ENCODE measurements at regions of chrX and their contacts with region 1.

Region 1: GRCh38 chrX:154013614-154014360 is 5.9 kb downstream of the IRAK1 start:
- DNase-seq: peak; percentile 37 to 72 (median 65)
- H3K4me3 ChIP-seq: no peak overlapping the region
- H3K27ac ChIP-seq: no peak overlapping the region
- H3K4me1 ChIP-seq: peaks cover 0 to 21% (median 17%) of the 10 kb centered on the region in 4 experiments
- H3K27me3 ChIP-seq: peaks cover 0 to 37% (median 0%) of the 10 kb centered on the region in 5 experiments

Region 2: GRCh38 chrX:153818571-153819383 is 195.0 kb before region 1 on chrX:
- CTCF ChIA-PET with region 1: no interaction called
- POLR2A ChIA-PET with region 1: no interaction called
- DNase-seq: peak; percentile 20 to 58 (median 49)
- H3K4me3 ChIP-seq: peak overlapping the region in 4 of 7 experiments; percentile 16 to 67 (median 42)
- H3K27ac ChIP-seq: no peak overlapping the region
- H3K4me1 ChIP-seq: peaks cover 0 to 42% (median 30%) of the 10 kb centered on the region in 4 experiments
- H3K27me3 ChIP-seq: peaks cover 0 to 44% (median 2%) of the 10 kb centered on the region in 5 experiments

Region 3: GRCh38 chrX:153971450-153972367 is 42.1 kb before region 1 on chrX and contains the start of gene HCFC1:
- CTCF ChIA-PET with region 1: interaction called, 11 read pairs
- POLR2A ChIA-PET with region 1: no interaction called
- DNase-seq: peak; percentile 89 to 96 (median 95)
- H3K4me3 ChIP-seq: peak within 1 kb of the TSS; percentile 80 to 97 (median 93)
- H3K27ac ChIP-seq: peak within 1 kb of the TSS; percentile 98 to 99
- H3K4me1 ChIP-seq: peaks cover 13 to 53% (median 51%) of the 10 kb centered on the region in 4 experiments
- H3K27me3 ChIP-seq: peaks cover 0 to 22% (median 0%) of the 10 kb centered on the region in 5 experiments

Region 4: GRCh38 chrX:154002215-154002719 is 11.5 kb before region 1 on chrX:
- CTCF ChIA-PET with region 1: interaction called, 26 read pairs
- POLR2A ChIA-PET with region 1: interaction called, 5 read pairs
- DNase-seq: peak; percentile 81 to 91 (median 90)
- H3K4me3 ChIP-seq: peak overlapping the region in 3 of 7 experiments; percentile 1 to 62 (median 46)
- H3K27ac ChIP-seq: peak overlapping the region; percentile 47 to 84
- H3K4me1 ChIP-seq: peaks cover 3 to 38% (median 25%) of the 10 kb centered on the region in 4 experiments
- H3K27me3 ChIP-seq: peaks cover 0 to 9% (median 0%) of the 10 kb centered on the region in 5 experiments

Region 5: DNA sequence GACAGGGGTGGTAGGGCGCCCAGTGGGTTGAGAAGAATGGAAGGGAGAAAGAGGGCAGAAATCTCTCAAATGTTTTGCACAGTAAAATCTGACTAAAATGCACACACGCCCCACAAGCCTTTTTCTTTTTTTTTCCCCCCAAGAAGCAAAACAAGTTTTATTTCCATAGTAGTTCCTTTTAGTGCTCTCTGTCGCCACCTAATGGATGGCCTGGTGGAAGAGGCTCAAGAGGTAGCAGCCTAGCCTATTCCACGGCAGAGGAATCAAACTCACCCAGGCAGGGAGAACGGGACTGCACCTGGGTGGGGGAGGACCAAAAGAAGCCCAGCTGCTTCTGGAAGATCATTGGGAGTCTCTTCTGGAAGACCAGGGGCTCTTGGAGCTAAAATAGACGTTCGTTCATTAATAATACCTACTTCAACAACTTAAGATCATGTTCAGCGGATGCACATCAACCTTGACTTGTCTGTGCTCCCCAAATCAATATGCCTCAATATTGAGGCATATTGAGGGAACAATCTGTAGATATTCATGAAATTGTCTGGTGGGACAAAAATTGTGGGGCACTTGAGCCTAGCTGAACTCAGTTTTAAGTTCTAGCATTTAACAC is 37.5 kb after region 1 on chrX:
- CTCF ChIA-PET with region 1: interaction called, 15 read pairs
- POLR2A ChIA-PET with region 1: no interaction called
- DNase-seq: peak; percentile 48 to 79 (median 70)
- H3K4me3 ChIP-seq: peak overlapping the region in 1 of 7 experiments; percentile 28
- H3K27ac ChIP-seq: no peak overlapping the region
- H3K4me1 ChIP-seq: peaks cover 0 to 7% (median 0%) of the 10 kb centered on the region in 4 experiments
- H3K27me3 ChIP-seq: peaks cover 0 to 17% (median 0%) of the 10 kb centered on the region in 5 experiments

Measured in common myeloid progenitor, CD34-positive (primary cell).